ENCODE measurements at regions of chr3 and their contacts with region 1.

Region 1: DNA sequence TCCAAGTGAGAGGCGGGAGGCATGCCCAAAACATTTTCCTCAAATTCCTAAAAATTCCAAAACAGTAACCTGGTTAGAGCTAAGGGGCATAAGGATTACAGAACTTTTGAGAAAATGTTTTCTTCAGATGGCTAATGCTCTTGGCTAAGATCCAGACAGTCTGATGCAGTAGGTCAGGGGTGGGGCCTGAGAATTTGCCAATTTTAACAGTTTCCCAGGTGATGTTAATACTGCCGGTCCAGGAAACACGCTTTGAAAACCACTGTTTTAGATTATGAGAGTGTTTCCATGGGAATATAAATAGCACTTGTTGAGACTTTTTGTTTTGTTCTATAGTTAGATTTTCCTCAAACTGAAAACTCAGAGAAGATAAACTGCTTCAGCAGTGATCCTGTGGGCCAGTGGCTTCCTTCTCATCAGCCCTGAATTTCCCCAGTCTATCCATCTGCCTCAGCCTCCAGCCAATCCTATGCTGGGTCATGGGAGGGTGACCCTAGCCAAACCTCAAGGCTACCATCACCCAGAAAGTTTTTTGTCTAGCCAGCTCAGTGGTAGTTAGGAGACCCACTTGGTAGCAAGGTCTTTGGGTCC is 71.6 kb upstream of the ACP3 start:
- DNase-seq: no peak
- H3K4me3 ChIP-seq: no peak overlapping the region
- CTCF ChIP-seq: no peak
- POLR2A ChIP-seq: no peak

Region 2: GRCh38 chr3:132346841-132347736 is 101.4 kb after region 1 on chr3:
- intact Hi-C with region 1: loop called (anchors 5 kb)
- DNase-seq: no peak
- H3K4me3 ChIP-seq: no peak overlapping the region
- CTCF ChIP-seq: no peak
- POLR2A ChIP-seq: no peak

Region 3: GRCh38 chr3:132432639-132433038 is 187.0 kb after region 1 on chr3:
- intact Hi-C with region 1: no loop called
- DNase-seq: no peak
- H3K4me3 ChIP-seq: no peak overlapping the region
- CTCF ChIP-seq: no peak
- POLR2A ChIP-seq: no peak

Region 4: DNA sequence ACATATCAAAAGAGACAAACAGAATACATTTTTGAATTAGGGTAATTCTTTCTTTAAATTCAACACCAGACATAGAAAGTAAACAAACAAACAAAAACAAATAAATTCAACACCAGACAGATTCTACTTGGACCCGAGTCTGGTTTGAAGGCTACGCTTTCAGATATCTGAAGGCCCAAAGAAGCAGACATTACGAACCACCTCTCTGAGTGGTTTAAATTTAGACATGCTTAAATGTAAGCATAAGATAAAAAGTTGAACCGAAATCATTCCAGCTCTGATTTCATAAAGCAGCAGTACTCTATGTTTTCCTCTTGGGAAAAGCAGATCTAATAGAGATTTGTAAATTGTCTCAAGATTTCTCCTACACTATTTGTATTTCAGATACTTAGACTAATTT is 444.4 kb after region 1 on chr3:
- intact Hi-C with region 1: no loop called
- DNase-seq: no peak
- H3K4me3 ChIP-seq: no peak overlapping the region
- CTCF ChIP-seq: no peak
- POLR2A ChIP-seq: no peak

Measured in lower leg skin (tissue), 4 donors.